ENCODE measurements at regions of chr22 and their contacts with region 1.

Region 1: GRCh38 chr22:32103658-32104315 is 55.3 kb downstream of the C22orf42 start:
- DNase-seq: peak; percentile 41
- ATAC-seq: no peak
- H3K4me3 ChIP-seq: no peak overlapping the region
- H3K4me3 Mint-ChIP-seq: no peak overlapping the region
- H3K27ac ChIP-seq: no peak overlapping the region
- H3K27ac Mint-ChIP-seq: no peak overlapping the region
- H3K4me1 ChIP-seq: no peaks in the 10 kb centered on the region
- H3K4me1 Mint-ChIP-seq: no peaks in the 10 kb centered on the region
- H3K27me3 ChIP-seq: peaks cover 0 to 5% (median 2%) of the 10 kb centered on the region in 4 experiments
- H3K27me3 Mint-ChIP-seq: peaks cover 37% of the 10 kb centered on the region
- CTCF ChIP-seq: peak; percentile 79

Region 2: GRCh38 chr22:32042924-32043790 is 60.6 kb before region 1 on chr22 and contains the start of gene SLC5A1:
- CTCF ChIA-PET with region 1: no interaction called
- POLR2A ChIA-PET with region 1: no interaction called
- intact Hi-C with region 1: no loop called
- DNase-seq: no peak
- ATAC-seq: no peak
- H3K4me3 ChIP-seq: no peak within 1 kb of the TSS
- H3K4me3 Mint-ChIP-seq: no peak within 1 kb of the TSS
- H3K27ac ChIP-seq: no peak within 1 kb of the TSS
- H3K27ac Mint-ChIP-seq: no peak within 1 kb of the TSS
- H3K4me1 ChIP-seq: no peaks in the 10 kb centered on the region
- H3K4me1 Mint-ChIP-seq: no peaks in the 10 kb centered on the region
- H3K27me3 ChIP-seq: peaks cover 0 to 27% (median 10%) of the 10 kb centered on the region in 4 experiments
- H3K27me3 Mint-ChIP-seq: peaks cover 68% of the 10 kb centered on the region
- CTCF ChIP-seq: no peak
- total RNA-seq, gene SLC5A1: not detected in 2 replicates

Region 3: DNA sequence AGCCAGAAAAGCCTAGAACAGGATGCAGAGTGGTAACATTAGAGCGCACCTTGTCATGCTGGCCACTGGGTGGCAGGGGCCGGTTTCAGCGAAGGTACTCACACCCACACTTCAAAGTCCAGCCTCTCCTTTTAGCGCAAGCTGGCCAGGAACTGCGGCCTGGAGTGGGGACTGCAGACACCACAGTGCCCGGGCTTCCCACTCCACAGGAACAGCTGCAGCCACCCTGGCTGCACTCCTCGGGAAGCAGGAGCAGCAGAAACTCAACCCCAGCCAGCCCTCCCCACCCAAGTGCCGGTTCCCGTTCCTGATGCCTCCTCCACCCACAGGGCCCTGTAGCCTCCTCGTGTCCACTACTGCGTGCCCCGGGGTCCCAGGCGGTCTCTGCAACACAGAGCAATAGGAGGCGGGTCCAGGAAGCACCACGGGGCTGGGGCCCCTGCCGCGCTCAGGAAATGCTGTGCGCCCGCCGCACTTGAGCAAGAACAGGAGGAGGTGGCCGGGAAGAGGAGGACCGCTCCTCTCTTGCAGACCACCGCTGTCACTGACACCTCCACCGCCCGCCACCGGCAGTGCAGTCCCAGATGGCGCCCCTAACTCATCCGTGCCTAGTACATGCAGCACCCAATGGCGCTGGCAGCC is 98.9 kb after region 1 on chr22:
- CTCF ChIA-PET with region 1: interaction called, 3 read pairs
- POLR2A ChIA-PET with region 1: no interaction called
- intact Hi-C with region 1: loop called (anchors 2 kb)
- DNase-seq: peak; percentile 28
- ATAC-seq: no peak
- H3K4me3 ChIP-seq: peak overlapping the region in 1 of 5 experiments; percentile 7
- H3K4me3 Mint-ChIP-seq: peak overlapping the region; percentile 30
- H3K27ac ChIP-seq: no peak overlapping the region
- H3K27ac Mint-ChIP-seq: no peak overlapping the region
- H3K4me1 ChIP-seq: peaks cover 6 to 8% of the 10 kb centered on the region in 2 donors
- H3K4me1 Mint-ChIP-seq: peaks cover 4% of the 10 kb centered on the region
- H3K27me3 ChIP-seq: peaks cover 0 to 24% (median 5%) of the 10 kb centered on the region in 4 experiments
- H3K27me3 Mint-ChIP-seq: peaks cover 36% of the 10 kb centered on the region
- CTCF ChIP-seq: peak; percentile 49

Region 4: DNA sequence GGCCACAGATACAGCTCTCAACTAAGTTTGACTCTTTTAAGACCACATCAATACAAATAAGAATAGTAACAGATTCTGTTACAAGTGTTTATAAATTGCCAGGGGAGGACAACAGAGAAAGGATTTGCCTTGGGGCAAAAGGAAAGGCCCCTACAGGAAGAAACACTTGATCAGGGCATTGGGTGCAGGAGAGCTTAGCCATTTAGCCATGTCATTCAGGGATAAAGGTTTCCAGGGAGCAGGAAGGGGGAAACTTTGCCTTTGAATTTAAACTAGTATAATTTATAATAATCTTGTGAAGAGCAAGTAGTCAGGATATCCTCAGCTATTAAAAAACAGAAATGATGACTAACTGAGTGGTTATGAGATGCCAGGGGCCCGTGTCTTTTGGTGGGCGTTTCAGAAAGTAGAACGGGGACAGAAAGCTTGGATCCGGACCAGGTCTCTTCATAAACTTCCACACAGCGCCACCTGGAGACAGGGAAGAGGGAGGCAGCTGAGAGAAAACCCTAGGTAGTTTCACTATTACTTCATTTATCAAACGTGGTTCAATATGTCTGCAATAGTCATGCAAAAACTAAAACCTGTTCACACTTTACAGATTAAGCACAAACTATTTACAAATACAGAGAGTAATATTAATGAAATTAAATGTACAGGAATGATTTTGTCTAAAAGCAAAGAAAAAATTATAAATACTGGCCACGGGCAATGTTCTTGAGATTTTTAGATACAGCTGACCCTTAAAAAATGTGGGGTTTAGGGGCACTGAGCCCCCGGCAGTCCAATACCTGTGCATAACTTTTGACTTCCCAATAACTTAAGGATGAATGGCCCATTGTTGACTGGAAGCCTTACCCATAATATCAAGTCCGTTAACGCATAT is 162.3 kb after region 1 on chr22:
- CTCF ChIA-PET with region 1: interaction called, 35 read pairs
- POLR2A ChIA-PET with region 1: no interaction called
- intact Hi-C with region 1: no loop called
- DNase-seq: peak; percentile 62
- ATAC-seq: peak; percentile 36
- H3K4me3 ChIP-seq: no peak overlapping the region
- H3K4me3 Mint-ChIP-seq: no peak overlapping the region
- H3K27ac ChIP-seq: no peak overlapping the region
- H3K27ac Mint-ChIP-seq: no peak overlapping the region
- H3K4me1 ChIP-seq: no peaks in the 10 kb centered on the region
- H3K4me1 Mint-ChIP-seq: peaks cover 3% of the 10 kb centered on the region
- H3K27me3 ChIP-seq: no peaks in the 10 kb centered on the region
- H3K27me3 Mint-ChIP-seq: peaks cover 4% of the 10 kb centered on the region
- CTCF ChIP-seq: peak; percentile 89

Region 5: DNA sequence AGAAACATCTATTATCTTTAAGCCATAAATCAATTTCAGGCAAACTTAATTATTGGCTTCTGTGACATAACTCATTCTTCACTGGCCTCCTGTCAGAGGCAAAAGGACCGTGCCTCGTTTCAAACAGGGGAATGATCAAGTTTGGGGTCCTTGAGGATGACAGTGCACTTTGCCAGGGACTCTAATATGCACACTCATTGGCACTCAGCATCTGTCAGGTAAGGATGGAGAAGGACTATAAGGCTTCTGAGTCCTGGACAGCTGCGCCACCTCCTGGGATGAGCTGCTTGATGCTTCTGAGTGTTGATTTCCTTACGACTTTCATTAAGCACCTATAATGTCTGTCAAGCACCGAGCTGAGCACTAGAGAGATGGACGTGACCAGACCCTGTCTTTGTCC is 340.3 kb after region 1 on chr22:
- CTCF ChIA-PET with region 1: interaction called, 3 read pairs
- POLR2A ChIA-PET with region 1: no interaction called
- intact Hi-C with region 1: loop called (anchors 10 kb)
- DNase-seq: peak; percentile 31
- ATAC-seq: no peak
- H3K4me3 ChIP-seq: no peak overlapping the region
- H3K4me3 Mint-ChIP-seq: no peak overlapping the region
- H3K27ac ChIP-seq: no peak overlapping the region
- H3K27ac Mint-ChIP-seq: no peak overlapping the region
- H3K4me1 ChIP-seq: no peaks in the 10 kb centered on the region
- H3K4me1 Mint-ChIP-seq: no peaks in the 10 kb centered on the region
- H3K27me3 ChIP-seq: peaks cover 0 to 15% (median 2%) of the 10 kb centered on the region in 4 experiments
- H3K27me3 Mint-ChIP-seq: peaks cover 13% of the 10 kb centered on the region
- CTCF ChIP-seq: no peak

Measured in B cell (primary cell).